Activated CD4-positive, alpha-beta memory T cell treated with anti-CD3 and anti-CD28 coated beads for 36 hours (primary cell): ENCODE measurements at regions of chr1 and their contacts with region 1.

Region 1: GRCh38 chr1:15290382-15290781 is 43.4 kb downstream of the FHAD1 start:
- DNase-seq: peak; percentile 38
- H3K4me3 Mint-ChIP-seq: no peak overlapping the region
- H3K27ac Mint-ChIP-seq: peak overlapping the region; percentile 29
- H3K4me1 Mint-ChIP-seq: peaks cover 14% of the 10 kb centered on the region
- H3K27me3 Mint-ChIP-seq: peaks cover 10% of the 10 kb centered on the region

Region 2: GRCh38 chr1:15251857-15252835 is 38.2 kb before region 1 on chr1:
- CTCF ChIA-PET with region 1: interaction called, 3 read pairs
- POLR2A ChIA-PET with region 1: interaction called, 4 read pairs
- intact Hi-C with region 1: loop called (anchors 2 kb)
- DNase-seq: no peak
- H3K4me3 Mint-ChIP-seq: no peak overlapping the region
- H3K27ac Mint-ChIP-seq: no peak overlapping the region
- H3K4me1 Mint-ChIP-seq: peaks cover 53% of the 10 kb centered on the region
- H3K27me3 Mint-ChIP-seq: peaks cover 18% of the 10 kb centered on the region

Region 3: DNA sequence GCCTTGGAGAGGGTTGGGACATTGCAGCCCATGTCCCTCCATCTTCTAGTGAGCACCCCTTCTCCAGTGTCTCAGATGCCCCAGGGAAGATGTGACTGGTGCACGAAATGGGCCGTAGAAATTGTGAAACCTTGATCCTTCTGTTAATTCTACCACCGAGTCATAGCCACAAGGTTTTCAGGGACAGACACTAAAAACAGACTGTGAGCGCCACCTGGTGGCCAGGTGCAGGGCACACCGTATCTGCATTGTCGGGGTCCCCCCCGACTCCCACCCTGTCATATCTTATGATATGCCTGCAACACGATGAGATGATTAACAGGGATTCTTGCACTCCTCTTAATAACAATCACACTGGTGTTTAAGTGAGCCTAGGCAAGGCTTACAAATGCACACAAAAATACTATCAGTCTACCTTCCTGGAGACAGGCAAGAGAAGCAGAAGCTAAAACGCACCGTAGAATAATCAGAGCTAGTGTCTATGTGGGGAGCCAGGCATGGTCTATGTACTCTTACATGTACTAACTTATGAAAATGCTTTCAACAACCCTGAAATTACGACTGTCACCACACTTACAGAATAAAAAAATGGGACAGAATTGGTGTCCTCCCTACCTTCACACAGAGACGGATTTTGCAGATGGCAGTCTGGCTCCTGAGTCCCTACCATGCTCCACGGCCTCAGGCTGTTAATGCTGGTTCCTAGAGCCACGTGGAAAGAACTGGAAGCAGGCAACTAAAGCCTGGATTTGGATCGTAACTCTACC is 14.5 kb after region 1 on chr1:
- CTCF ChIA-PET with region 1: interaction called, 10 read pairs
- POLR2A ChIA-PET with region 1: no interaction called
- intact Hi-C with region 1: no loop called
- DNase-seq: peak; percentile 77
- H3K4me3 Mint-ChIP-seq: no peak overlapping the region
- H3K27ac Mint-ChIP-seq: no peak overlapping the region
- H3K4me1 Mint-ChIP-seq: peaks cover 5% of the 10 kb centered on the region
- H3K27me3 Mint-ChIP-seq: peaks cover 7% of the 10 kb centered on the region

Region 4: DNA sequence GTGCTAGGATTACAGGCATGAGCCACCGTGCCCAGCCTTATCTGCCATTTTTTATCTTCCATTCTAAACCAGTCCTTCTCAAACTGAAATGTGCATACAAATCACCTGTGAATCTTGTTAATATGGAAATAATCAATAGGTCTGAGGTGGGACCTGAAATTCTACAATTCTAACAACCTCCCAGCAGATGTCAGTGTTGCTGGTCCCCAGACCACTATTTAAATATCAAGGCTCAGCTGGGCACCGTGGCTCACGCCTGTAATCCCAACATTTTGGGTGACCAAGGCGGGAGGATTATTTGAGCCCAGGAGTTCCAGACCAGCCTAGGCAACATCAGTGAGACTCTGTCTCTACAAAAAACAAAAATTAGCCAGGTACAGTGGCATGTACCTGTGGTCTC is 513.0 kb after region 1 on chr1:
- CTCF ChIA-PET with region 1: no interaction called
- POLR2A ChIA-PET with region 1: no interaction called
- intact Hi-C with region 1: no loop called
- DNase-seq: peak; percentile 32
- H3K4me3 Mint-ChIP-seq: no peak overlapping the region
- H3K27ac Mint-ChIP-seq: no peak overlapping the region
- H3K4me1 Mint-ChIP-seq: no peaks in the 10 kb centered on the region
- H3K27me3 Mint-ChIP-seq: no peaks in the 10 kb centered on the region